Activated T-helper 2 cell treated with anti-CD3 and anti-CD28 coated beads, Interferon-gamma antibody, Interleukin-2, Interleukin-4, amounts not matched to agents 10 μg/mL and 5 μg/mL and 100 μg/mL, durations not matched to agents 14 hours and 24 hours and 36 hours (primary cell): ENCODE measurements at regions of chr5 and their contacts with region 1.

Region 1: DNA sequence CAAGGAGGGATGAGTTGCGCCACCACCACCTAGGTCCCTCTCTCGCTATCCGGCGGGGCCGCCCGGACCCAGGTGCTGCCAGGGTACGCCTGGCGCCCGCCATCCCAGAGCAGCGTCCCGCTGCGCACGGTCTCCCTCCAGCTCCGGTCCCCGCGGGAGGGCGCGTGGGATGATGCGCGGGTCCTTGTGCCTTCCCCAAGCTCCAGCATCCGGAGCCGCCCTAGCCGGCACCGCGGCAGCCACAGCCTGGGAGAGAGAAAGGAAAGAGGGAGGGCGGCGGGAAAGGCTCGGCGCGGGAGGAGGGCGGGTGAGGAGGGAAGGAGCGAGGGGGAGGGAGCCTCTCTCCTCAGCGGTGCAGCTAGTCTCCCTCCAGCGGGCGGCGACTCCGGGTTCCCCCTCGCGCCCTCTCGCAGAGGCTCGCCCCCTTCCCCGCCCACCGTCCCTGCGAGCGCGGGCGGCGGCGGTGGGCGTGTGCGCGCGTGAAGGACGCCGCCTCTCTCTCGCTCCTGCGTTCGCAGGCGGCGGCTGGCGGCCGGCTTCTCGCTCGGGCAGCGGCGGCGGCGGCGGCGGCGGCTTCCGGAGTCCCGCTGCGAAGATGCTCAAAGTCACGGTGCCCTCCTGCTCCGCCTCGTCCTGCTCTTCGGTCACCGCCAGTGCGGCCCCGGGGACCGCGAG is at the start of gene CAMK4:
- DNase-seq: peak; percentile 74
- H3K4me3 Mint-ChIP-seq: peak within 1 kb of the TSS; percentile 97
- H3K27ac Mint-ChIP-seq: peak within 1 kb of the TSS; percentile 97
- H3K4me1 Mint-ChIP-seq: peaks cover 47% of the 10 kb centered on the region
- H3K27me3 Mint-ChIP-seq: no peaks in the 10 kb centered on the region
- total RNA-seq, gene CAMK4: 71.8 and 76.7 TPM in 2 replicates

Region 2: DNA sequence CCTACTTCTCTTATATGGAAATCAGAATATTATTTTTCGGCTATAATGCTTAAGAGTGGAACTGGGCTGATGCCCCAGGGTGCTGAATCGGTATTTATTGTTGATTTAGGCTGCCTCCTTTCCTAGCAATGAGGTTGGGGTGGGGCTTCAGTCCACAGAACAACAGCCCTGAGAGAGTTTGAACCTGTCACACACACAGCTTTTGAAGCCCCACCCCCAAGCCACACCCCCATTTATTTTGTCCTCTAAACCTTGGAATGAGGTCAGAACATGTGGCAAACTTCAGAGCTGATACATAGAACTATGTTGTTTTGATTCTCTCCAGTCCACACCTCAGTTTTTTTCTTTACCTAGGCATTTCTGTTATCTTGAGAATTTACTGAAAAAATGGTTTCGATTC is 51.5 kb before region 1 on chr5:
- intact Hi-C with region 1: no loop called
- DNase-seq: no peak
- H3K4me3 Mint-ChIP-seq: no peak overlapping the region
- H3K27ac Mint-ChIP-seq: no peak overlapping the region
- H3K4me1 Mint-ChIP-seq: no peaks in the 10 kb centered on the region
- H3K27me3 Mint-ChIP-seq: peaks cover 14% of the 10 kb centered on the region

Region 3: GRCh38 chr5:111211341-111211740 is 12.7 kb before region 1 on chr5:
- intact Hi-C with region 1: loop called (anchors 1 kb)
- DNase-seq: no peak
- H3K4me3 Mint-ChIP-seq: no peak overlapping the region
- H3K27ac Mint-ChIP-seq: no peak overlapping the region
- H3K4me1 Mint-ChIP-seq: peaks cover 29% of the 10 kb centered on the region
- H3K27me3 Mint-ChIP-seq: peaks cover 3% of the 10 kb centered on the region

Region 4: DNA sequence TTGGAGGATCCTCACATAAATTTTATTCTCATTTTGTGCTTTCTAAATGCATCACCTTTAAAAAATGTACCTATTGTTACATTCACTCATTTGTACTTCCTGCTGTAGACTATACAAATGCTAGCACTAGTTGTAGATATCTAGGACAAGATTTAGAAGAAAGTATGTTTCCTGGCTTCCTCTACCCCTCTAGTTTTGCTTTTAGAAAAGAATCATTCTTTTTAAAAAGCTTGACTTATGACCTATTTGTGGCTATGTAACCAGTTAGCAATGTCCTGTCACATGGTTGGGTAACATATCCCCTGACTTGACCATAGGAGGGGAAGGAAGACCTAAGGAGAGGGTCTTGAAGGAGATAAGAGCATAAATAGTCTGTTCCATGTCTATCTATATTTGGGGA is 13.4 kb after region 1 on chr5:
- intact Hi-C with region 1: loop called (anchors 1 kb)
- DNase-seq: no peak
- H3K4me3 Mint-ChIP-seq: peak overlapping the region; percentile 40
- H3K27ac Mint-ChIP-seq: peak overlapping the region; percentile 87
- H3K4me1 Mint-ChIP-seq: peaks cover 75% of the 10 kb centered on the region
- H3K27me3 Mint-ChIP-seq: no peaks in the 10 kb centered on the region